CD8-positive, alpha-beta memory T cell (primary cell): ENCODE measurements at regions of chr11 and their contacts with region 1.

Region 1: DNA sequence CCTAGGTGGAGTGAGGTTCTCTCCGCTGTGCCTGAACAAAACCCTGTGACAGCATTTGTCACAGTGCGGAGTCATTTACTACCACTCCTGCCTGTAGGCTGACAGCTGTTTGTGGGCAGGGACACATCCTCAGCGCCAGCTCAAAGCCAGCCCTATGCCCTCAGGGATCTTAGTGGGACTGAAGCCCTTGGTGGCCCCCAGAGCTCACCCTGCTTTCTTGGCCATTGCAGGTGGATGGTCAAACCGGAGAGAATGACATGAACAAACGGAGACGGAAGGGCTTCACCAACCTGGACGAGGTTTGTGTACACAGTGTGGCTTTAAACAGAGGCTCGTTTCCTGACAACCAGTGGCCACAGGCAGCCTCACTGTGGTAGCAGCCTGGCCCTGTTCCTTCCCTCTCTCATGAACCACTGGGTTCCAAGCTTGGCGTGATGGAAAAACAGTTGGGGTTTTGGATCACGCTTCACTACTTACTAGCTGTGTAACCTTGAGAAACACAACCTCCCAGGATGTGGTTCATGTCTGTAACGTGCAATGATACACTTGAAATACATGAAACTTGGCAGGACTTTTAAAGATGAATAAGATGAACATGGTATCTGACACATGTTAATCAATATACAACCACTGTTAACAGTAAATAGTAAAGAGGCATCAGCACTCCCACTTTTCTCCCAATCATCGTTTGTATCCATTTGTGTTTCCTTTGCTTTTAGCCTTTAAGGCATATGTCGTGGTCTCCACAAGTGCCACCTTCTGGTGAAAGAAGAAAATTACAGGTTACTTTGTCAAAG is 125.8 kb downstream of the MICAL2 start:
- DNase-seq: peak; percentile 10 to 78 (median 67)
- H3K4me3 ChIP-seq: peak overlapping the region; percentile 56
- H3K4me3 Mint-ChIP-seq: peak overlapping the region; percentile 9 to 78 (median 73)
- H3K27ac ChIP-seq: peak overlapping the region; percentile 71
- H3K27ac Mint-ChIP-seq: peak overlapping the region; percentile 78 to 99 (median 96)
- H3K4me1 ChIP-seq: peaks cover 18% of the 10 kb centered on the region
- H3K4me1 Mint-ChIP-seq: peaks cover 25 to 30% (median 29%) of the 10 kb centered on the region in 3 donors
- H3K27me3 ChIP-seq: no peaks in the 10 kb centered on the region
- H3K27me3 Mint-ChIP-seq: no peaks in the 10 kb centered on the region

Region 2: GRCh38 chr11:12087075-12088004 is 148.8 kb before region 1 on chr11:
- CTCF ChIA-PET with region 1: interaction called, 22 read pairs
- POLR2A ChIA-PET with region 1: no interaction called
- DNase-seq: peak; percentile 16 to 72 (median 44)
- H3K4me3 ChIP-seq: peak overlapping the region; percentile 19
- H3K4me3 Mint-ChIP-seq: peak overlapping the region; percentile 48 to 92 (median 78)
- H3K27ac ChIP-seq: no peak overlapping the region
- H3K27ac Mint-ChIP-seq: peak overlapping the region; percentile 66 to 94 (median 90)
- H3K4me1 ChIP-seq: peaks cover 66% of the 10 kb centered on the region
- H3K4me1 Mint-ChIP-seq: peaks cover 74 to 81% (median 80%) of the 10 kb centered on the region in 3 donors
- H3K27me3 ChIP-seq: no peaks in the 10 kb centered on the region
- H3K27me3 Mint-ChIP-seq: no peaks in the 10 kb centered on the region

Region 3: GRCh38 chr11:12192794-12193514 is 43.2 kb before region 1 on chr11:
- CTCF ChIA-PET with region 1: interaction called, 23 read pairs
- POLR2A ChIA-PET with region 1: interaction called, 3 read pairs
- DNase-seq: peak in 1 of 5 donors; percentile 75
- H3K4me3 ChIP-seq: no peak overlapping the region
- H3K4me3 Mint-ChIP-seq: peak overlapping the region in 1 of 7 donors; percentile 34
- H3K27ac ChIP-seq: no peak overlapping the region
- H3K27ac Mint-ChIP-seq: peak overlapping the region in 6 of 8 donors; percentile 20 to 83 (median 42)
- H3K4me1 ChIP-seq: peaks cover 44% of the 10 kb centered on the region
- H3K4me1 Mint-ChIP-seq: peaks cover 45 to 72% (median 51%) of the 10 kb centered on the region in 3 donors
- H3K27me3 ChIP-seq: no peaks in the 10 kb centered on the region
- H3K27me3 Mint-ChIP-seq: peaks cover 0 to 1% of the 10 kb centered on the region in 2 donors

Region 4: DNA sequence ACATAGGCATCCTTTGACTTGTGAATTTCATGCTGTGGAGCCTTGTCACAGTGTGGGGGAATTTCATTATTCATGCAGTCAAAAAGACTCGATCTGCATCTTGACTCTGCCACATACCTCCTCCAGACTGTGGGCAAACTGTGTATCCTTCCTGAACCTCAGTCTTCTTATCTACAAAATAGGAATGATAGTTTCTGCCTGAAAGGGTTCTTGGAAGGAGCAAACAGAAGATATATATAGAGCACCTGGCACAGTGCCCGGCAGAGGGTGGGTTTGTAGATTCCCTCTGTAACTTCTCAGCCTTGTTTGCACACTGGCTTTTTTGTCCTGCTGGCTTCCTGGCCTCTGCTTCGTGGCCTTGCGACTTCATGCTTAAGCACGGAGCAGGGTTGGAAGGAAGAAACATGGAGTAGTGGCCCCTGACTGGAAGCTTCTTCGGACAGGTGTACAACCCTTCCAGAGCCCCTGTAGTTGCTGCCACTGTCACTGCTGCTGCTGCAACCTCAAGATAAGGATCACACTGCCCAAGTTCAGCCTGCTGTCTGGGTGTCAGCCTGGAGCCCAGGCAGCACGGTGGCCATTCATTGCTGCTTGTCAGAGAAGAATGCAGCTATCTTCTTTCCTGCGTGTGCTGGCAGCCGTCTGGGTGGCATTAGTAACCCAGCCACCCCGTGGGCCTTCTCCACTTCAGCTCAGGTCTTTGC is 19.3 kb before region 1 on chr11:
- CTCF ChIA-PET with region 1: interaction called, 20 read pairs
- POLR2A ChIA-PET with region 1: no interaction called
- DNase-seq: no peak
- H3K4me3 ChIP-seq: no peak overlapping the region
- H3K4me3 Mint-ChIP-seq: peak overlapping the region in 4 of 7 donors; percentile 6 to 59 (median 42)
- H3K27ac ChIP-seq: peak overlapping the region; percentile 52
- H3K27ac Mint-ChIP-seq: peak overlapping the region; percentile 78 to 95 (median 88)
- H3K4me1 ChIP-seq: peaks cover 24% of the 10 kb centered on the region
- H3K4me1 Mint-ChIP-seq: peaks cover 25 to 49% (median 32%) of the 10 kb centered on the region in 3 donors
- H3K27me3 ChIP-seq: no peaks in the 10 kb centered on the region
- H3K27me3 Mint-ChIP-seq: peaks cover 0 to 2% of the 10 kb centered on the region in 2 donors

Region 5: DNA sequence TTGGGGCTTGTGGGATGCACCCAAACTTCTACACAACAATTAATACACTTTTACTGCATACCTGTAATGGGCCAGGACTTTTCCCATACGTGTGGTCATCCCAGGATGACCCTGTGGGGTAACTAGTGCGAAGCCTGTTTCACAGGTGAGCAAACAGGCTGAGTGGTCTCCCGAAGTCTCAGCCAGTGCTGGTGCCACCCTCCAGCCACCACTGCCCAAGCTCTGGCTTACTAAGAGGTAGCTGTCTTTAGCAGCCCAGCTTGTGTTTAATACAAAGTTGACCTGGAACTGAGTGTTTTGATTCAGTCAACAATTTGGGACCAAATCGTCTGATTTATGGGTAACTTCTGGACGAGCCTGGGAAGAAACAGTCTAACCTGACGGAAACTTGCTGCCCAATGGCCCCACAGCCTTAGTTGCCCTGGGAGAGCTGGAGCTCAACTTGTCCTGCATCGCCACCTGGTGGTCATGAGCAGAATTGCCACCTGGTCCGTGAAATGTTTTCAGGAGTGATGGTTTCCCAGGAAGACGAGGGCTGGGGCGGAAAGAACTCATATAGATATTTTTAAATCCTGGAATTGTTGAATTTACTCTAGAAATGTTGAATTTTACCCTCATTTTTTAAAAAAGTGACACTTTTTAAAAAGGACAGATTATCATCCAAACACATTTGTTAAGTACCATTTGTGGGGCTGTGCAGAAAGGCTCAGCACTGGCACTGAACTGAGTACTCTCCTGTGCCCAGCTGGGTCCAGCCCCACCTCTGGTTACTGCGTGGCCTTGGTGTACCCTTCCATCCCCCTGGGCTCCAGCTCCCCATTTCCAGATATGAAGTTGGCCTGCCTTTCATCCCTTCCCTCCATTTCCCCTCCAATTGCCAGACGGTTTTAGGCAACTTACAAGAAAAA is 45.7 kb after region 1 on chr11:
- CTCF ChIA-PET with region 1: interaction called, 32 read pairs
- POLR2A ChIA-PET with region 1: no interaction called
- DNase-seq: peak; percentile 62 to 84 (median 68)
- H3K4me3 ChIP-seq: no peak overlapping the region
- H3K4me3 Mint-ChIP-seq: no peak overlapping the region
- H3K27ac ChIP-seq: no peak overlapping the region
- H3K27ac Mint-ChIP-seq: peak overlapping the region in 1 of 8 donors; percentile 47
- H3K4me1 ChIP-seq: peaks cover 5% of the 10 kb centered on the region
- H3K4me1 Mint-ChIP-seq: no peaks in the 10 kb centered on the region
- H3K27me3 ChIP-seq: no peaks in the 10 kb centered on the region
- H3K27me3 Mint-ChIP-seq: no peaks in the 10 kb centered on the region